ENCODE measurements at regions of chr10 and their contacts with region 1.

Region 1: GRCh38 chr10:73879296-73880173 is 5.2 kb upstream of the CAMK2G start:
- DNase-seq: no peak
- H3K4me3 ChIP-seq: no peak overlapping the region
- H3K27ac ChIP-seq: no peak overlapping the region
- H3K27me3 ChIP-seq: no peaks in the 10 kb centered on the region
- CTCF ChIP-seq: peak; percentile 91

Region 2: DNA sequence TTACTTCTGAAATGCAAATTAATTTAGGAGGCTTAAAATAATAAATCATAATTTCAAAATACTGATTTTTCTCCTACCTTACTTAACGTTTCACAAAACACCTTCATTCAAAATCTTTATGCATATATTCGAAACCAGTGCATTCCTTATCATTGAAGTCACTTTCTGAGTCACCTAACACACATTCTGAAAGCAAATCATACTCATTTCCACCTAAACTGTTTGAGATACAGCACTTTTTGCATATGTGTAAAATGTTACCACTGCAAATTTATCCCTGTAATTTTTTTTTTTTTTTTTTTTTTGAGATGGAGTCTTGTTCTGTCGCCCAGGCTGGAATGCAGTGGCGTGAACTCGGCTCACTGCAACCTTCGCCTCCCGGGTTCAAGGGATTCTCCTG is 399.4 kb before region 1 on chr10:
- CTCF ChIA-PET with region 1: no interaction called
- POLR2A ChIA-PET with region 1: no interaction called
- DNase-seq: no peak
- H3K4me3 ChIP-seq: no peak overlapping the region
- H3K27ac ChIP-seq: no peak overlapping the region
- H3K27me3 ChIP-seq: no peaks in the 10 kb centered on the region
- CTCF ChIP-seq: no peak

Region 3: GRCh38 chr10:73848821-73849489 is 30.6 kb before region 1 on chr10:
- CTCF ChIA-PET with region 1: interaction called, 88 read pairs
- POLR2A ChIA-PET with region 1: interaction called, 3 read pairs
- DNase-seq: peak; percentile 49
- H3K4me3 ChIP-seq: no peak overlapping the region
- H3K27ac ChIP-seq: no peak overlapping the region
- H3K27me3 ChIP-seq: no peaks in the 10 kb centered on the region
- CTCF ChIP-seq: peak; percentile 99

Region 4: DNA sequence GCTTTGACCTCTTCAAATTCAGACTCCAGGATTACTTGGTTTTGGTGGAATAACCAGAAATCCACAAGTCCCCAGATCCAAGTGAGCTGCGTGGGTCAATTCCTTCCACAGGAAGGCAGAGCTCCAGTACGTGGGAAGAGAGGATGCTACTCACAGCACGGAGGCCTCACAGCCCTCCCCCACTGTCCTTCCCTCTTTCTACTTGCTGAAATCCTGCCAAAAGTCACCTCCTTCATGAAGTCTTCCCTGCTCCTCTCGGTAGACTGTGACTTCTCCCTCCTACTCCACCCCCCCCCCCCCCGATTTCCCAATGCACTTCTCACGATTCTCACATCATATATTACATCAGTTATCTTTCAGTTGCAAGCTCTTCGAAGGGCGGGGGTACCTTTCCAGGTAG is 17.5 kb before region 1 on chr10:
- CTCF ChIA-PET with region 1: interaction called, 11 read pairs
- POLR2A ChIA-PET with region 1: no interaction called
- DNase-seq: no peak
- H3K4me3 ChIP-seq: no peak overlapping the region
- H3K27ac ChIP-seq: no peak overlapping the region
- H3K27me3 ChIP-seq: no peaks in the 10 kb centered on the region
- CTCF ChIP-seq: no peak

Region 5: GRCh38 chr10:74026428-74027015 is 147.0 kb after region 1 on chr10:
- CTCF ChIA-PET with region 1: interaction called, 10 read pairs
- POLR2A ChIA-PET with region 1: no interaction called
- DNase-seq: no peak
- H3K4me3 ChIP-seq: no peak overlapping the region
- H3K27ac ChIP-seq: no peak overlapping the region
- H3K27me3 ChIP-seq: no peaks in the 10 kb centered on the region
- CTCF ChIP-seq: no peak

Region 6: DNA sequence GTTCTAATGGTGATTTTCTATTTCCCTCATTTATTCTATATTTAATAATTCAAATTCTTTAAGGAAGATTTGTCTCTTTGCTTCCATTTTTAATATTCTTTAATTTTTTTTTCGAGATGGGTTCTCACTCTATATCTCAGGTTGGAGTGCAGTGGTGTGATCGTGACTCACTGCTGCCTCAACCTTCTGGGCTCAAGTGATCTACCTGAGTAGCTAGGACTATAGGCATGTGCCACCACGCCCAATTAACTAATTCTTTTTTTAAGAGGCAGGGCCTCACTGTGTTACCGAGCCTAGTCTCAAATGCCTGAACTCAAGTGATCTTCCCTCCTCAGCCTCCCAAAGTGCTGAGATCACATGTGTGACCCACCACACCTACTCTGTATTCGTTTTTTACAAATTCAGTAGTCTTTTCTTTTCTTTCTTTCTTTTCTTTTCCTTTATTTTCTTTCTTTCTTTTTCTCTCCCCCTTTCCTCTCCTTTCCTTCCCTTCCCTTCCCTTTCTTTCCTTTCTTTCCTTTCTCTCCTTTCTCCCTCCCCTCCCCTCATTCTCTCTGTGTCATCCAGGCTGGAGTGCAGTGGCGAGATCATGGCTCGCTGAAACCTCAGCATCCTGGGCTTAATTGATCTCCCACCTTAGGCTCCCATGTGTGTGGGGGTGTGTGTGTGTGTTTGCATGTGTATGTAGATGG is 594.6 kb after region 1 on chr10:
- CTCF ChIA-PET with region 1: no interaction called
- POLR2A ChIA-PET with region 1: no interaction called
- DNase-seq: no peak
- H3K4me3 ChIP-seq: no peak overlapping the region
- H3K27ac ChIP-seq: no peak overlapping the region
- H3K27me3 ChIP-seq: no peaks in the 10 kb centered on the region
- CTCF ChIP-seq: no peak